ENCODE measurements at regions of chr19 and their contacts with region 1.

Region 1: DNA sequence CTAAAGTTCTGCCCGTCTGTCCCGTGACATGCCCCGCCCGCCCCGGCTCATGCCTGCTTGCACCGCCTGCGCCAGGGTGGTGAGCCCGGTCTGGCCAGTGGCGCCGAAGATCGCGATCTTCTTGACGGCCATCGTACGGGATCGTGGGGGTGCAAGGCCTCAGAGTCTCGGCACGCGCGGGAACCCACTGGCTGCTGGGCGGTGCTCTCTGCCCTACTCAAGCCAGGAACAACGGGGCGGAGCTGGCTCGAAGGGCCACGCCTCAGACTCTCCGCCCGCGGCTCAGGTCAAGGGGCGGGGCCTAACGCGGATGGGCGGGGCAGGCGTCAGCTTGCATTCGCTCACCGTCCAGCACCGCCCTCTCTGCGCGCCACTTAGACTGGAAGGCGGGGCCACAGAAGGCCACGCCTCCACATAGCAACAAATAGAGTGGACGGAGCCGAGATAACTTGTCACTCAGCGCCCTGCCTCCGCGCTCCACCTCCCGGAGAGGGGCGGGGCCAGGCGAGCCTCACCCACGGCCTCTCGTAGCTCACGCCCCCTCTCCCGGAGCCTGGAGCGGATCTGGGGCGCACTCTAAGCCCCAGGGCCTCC is at the start of gene BLVRB:
- DNase-seq: peak; percentile 100
- ATAC-seq: peak; percentile 89
- H3K4me3 Mint-ChIP-seq: peak within 1 kb of the TSS; percentile 80
- H3K27ac Mint-ChIP-seq: peak within 1 kb of the TSS; percentile 83
- H3K4me1 Mint-ChIP-seq: peaks cover 24% of the 10 kb centered on the region
- H3K27me3 Mint-ChIP-seq: peaks cover 9% of the 10 kb centered on the region
- CTCF ChIP-seq: no peak
- total RNA-seq, gene BLVRB: 21.2 to 21.7 TPM

Region 2: GRCh38 chr19:40305403-40305802 is 160.3 kb before region 1 on chr19:
- CTCF ChIA-PET with region 1: interaction called, 13 read pairs
- POLR2A ChIA-PET with region 1: interaction called, 3 read pairs
- intact Hi-C with region 1: no loop called
- DNase-seq: peak; percentile 82
- ATAC-seq: peak; percentile 68
- H3K4me3 Mint-ChIP-seq: no peak overlapping the region
- H3K27ac Mint-ChIP-seq: no peak overlapping the region
- H3K4me1 Mint-ChIP-seq: peaks cover 2% of the 10 kb centered on the region
- H3K27me3 Mint-ChIP-seq: no peaks in the 10 kb centered on the region
- CTCF ChIP-seq: peak; percentile 82

Region 3: GRCh38 chr19:40425450-40426287 is 40.0 kb before region 1 on chr19 and contains the start of gene SERTAD1:
- CTCF ChIA-PET with region 1: interaction called, 28 read pairs
- POLR2A ChIA-PET with region 1: no interaction called
- intact Hi-C with region 1: no loop called
- DNase-seq: peak; percentile 100
- ATAC-seq: peak; percentile 93
- H3K4me3 Mint-ChIP-seq: peak within 1 kb of the TSS; percentile 97
- H3K27ac Mint-ChIP-seq: peak within 1 kb of the TSS; percentile 96
- H3K4me1 Mint-ChIP-seq: peaks cover 12% of the 10 kb centered on the region
- H3K27me3 Mint-ChIP-seq: no peaks in the 10 kb centered on the region
- CTCF ChIP-seq: no peak
- total RNA-seq, gene SERTAD1: 15.5 to 17.2 TPM

Region 4: DNA sequence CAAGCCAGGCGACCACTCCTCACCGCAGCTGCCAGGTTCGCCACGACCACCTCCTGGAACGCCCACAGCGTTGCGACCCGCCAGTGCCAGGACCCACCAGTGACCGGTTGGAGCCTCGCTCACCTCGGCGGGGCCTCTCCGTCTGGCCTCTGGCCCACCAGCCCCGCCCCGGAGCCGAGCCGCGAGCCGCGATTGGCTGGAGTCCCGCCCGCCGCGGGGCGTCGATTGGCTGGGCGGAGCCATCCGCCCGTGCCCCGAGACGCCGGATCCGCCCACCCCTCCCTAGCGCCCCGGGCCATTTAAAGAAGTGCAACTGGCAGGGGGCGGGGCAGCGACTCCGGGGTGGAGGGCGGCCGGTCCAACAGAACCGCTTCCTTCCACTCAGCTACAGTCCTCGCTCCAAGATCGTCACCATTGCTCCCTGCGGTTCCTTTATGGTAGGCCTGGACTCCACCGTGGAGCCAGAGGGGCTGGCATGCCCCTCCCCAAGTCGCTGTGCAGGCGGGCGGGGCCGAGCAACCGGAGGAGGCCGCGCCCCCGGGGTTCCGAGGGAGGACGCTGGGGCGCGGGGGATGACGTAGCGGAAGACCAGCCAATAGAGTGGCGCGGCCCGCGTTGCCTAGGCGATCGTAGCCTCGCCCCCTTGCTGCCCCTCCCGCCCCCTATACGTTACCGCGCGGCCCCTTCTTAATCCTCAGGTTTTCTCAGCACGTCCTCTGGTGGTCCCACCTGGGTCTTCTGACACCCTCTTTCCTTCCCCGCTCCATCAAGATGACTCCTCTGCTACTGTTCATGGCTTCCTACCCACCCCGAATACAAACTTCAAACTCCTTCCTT is 21.2 kb before region 1 on chr19 and contains the start of gene SERTAD3:
- CTCF ChIA-PET with region 1: interaction called, 19 read pairs
- POLR2A ChIA-PET with region 1: interaction called, 16 read pairs
- intact Hi-C with region 1: no loop called
- DNase-seq: peak; percentile 98
- ATAC-seq: peak; percentile 75
- H3K4me3 Mint-ChIP-seq: peak within 1 kb of the TSS; percentile 92
- H3K27ac Mint-ChIP-seq: peak within 1 kb of the TSS; percentile 93
- H3K4me1 Mint-ChIP-seq: peaks cover 24% of the 10 kb centered on the region
- H3K27me3 Mint-ChIP-seq: no peaks in the 10 kb centered on the region
- CTCF ChIP-seq: peak; percentile 17
- total RNA-seq, gene SERTAD3: 8.8 to 11.2 TPM

Region 5: GRCh38 chr19:40452016-40452415 is 13.6 kb before region 1 on chr19:
- CTCF ChIA-PET with region 1: interaction called, 12 read pairs
- POLR2A ChIA-PET with region 1: no interaction called
- intact Hi-C with region 1: no loop called
- DNase-seq: no peak
- ATAC-seq: no peak
- H3K4me3 Mint-ChIP-seq: no peak overlapping the region
- H3K27ac Mint-ChIP-seq: no peak overlapping the region
- H3K4me1 Mint-ChIP-seq: no peaks in the 10 kb centered on the region
- H3K27me3 Mint-ChIP-seq: no peaks in the 10 kb centered on the region
- CTCF ChIP-seq: no peak

Region 6: DNA sequence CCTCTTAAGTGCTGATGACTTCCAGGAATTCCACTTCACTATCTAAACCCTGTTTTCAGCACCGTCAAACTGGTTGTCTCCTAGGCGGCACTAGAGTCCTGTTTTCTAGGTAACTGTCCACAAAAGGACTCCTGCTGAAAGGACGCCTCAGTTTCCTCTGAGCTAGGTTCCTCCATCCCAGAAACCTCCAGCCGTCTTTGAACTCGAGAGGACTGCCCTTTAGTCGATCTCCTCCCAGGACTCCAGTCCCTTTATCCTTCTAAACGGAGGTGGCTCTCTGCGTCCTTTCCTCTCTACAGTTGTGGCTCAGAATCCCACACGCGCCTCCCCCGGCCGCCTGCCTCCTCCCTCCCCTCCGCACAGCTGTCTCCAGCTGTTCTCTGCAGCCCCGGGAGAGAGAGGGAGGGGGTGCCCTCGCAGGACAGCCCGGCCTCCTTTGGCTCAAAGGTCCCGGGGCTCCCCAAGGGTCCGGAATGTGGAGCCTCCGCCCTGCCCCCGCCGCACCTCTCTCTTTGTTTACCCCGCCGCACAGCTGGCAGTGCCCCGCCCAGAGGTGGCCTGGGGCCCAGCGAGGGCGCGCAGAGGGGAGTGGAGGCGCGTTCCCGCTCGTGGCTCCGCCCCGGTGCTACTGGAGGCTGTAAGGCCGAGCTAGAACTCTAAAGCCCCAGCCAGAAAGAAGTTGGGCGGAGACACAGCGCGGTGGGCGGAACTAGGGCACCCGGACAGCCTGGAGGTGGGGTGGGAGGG is 137.9 kb after region 1 on chr19:
- CTCF ChIA-PET with region 1: interaction called, 12 read pairs
- POLR2A ChIA-PET with region 1: interaction called, 3 read pairs
- intact Hi-C with region 1: no loop called
- DNase-seq: peak; percentile 99
- ATAC-seq: peak; percentile 78
- H3K4me3 Mint-ChIP-seq: peak overlapping the region; percentile 77
- H3K27ac Mint-ChIP-seq: no peak overlapping the region
- H3K4me1 Mint-ChIP-seq: peaks cover 69% of the 10 kb centered on the region
- H3K27me3 Mint-ChIP-seq: peaks cover 28% of the 10 kb centered on the region
- CTCF ChIP-seq: no peak

Region 7: GRCh38 chr19:40633207-40633606 is 167.6 kb after region 1 on chr19:
- CTCF ChIA-PET with region 1: interaction called, 26 read pairs
- POLR2A ChIA-PET with region 1: no interaction called
- intact Hi-C with region 1: no loop called
- DNase-seq: no peak
- ATAC-seq: no peak
- H3K4me3 Mint-ChIP-seq: no peak overlapping the region
- H3K27ac Mint-ChIP-seq: no peak overlapping the region
- H3K4me1 Mint-ChIP-seq: peaks cover 7% of the 10 kb centered on the region
- H3K27me3 Mint-ChIP-seq: peaks cover 6% of the 10 kb centered on the region
- CTCF ChIP-seq: no peak

Measured in activated CD8-positive, alpha-beta T cell treated with anti-CD3 and anti-CD28 coated beads for 36 hours (primary cell).